OCI-LY7 (cell line): ENCODE measurements at regions of chr6 and their contacts with region 1.

Region 1: DNA sequence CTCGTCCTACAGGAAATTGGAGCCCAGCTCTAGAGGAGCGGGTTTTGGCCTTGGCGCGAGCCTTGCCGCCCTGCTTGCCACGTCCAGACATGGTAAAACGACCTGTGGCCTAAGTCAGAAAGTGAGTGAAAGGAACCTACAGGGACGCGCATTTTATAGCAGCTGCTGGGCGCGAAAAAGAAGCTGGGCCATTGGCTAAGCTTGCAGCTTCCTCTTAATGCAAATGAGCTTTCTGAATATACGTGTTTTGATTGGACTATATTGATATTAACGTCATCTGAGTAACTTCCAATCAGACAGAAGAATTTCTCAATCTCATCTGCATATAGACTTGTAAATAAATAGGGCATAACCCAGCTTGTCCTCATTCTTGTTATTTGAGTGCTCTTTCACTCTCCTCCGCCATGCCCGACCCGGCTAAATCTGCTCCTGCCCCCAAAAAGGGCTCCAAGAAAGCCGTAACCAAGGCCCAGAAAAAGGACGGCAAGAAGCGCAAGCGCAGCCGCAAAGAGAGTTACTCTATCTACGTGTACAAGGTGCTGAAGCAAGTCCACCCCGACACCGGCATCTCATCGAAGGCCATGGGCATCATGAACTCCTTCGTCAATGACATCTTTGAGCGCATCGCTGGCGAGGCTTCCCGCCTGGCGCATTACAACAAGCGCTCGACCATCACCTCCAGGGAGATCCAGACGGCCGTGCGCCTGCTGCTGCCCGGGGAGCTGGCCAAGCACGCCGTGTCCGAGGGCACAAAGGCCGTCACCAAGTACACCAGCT is 18.9 kb downstream of the OR2B2 start:
- DNase-seq: peak; percentile 96
- H3K4me3 ChIP-seq: peak overlapping the region; percentile 94
- H3K27ac ChIP-seq: peak overlapping the region; percentile 100
- H3K4me1 ChIP-seq: peaks cover 36% of the 10 kb centered on the region
- CTCF ChIP-seq: no peak

Region 2: DNA sequence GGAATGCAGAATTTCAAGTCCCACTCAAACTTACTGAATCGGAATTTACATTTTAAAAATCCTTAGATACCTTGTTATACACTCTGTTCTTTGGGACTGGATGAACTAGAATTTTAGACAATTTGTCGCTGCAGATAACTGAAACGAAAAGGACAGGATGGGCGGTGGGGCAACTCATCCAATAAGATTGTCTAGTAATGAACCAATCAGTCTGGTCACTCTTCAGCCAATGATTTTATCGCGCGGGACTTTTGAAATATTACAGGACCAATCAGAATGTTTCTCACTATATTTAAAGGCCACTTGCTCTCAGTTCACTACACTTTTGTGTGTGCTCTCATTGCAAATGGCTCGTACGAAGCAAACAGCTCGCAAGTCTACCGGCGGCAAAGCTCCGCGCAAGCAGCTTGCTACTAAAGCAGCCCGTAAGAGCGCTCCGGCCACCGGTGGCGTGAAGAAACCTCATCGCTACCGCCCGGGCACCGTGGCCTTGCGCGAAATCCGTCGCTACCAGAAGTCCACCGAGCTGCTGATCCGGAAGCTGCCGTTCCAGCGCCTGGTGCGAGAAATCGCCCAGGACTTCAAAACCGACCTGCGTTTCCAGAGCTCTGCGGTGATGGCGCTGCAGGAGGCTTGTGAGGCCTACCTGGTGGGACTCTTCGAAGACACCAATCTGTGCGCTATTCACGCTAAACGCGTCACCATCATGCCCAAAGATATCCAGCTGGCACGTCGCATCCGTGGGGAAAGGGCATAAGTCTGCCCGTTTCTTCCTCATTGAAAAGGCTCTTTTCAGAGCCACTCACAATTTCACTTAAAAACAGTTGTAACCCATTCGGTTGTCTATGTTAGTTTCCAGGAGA is 1848.0 kb before region 1 on chr6:
- CTCF ChIA-PET with region 1: no interaction called
- POLR2A ChIA-PET with region 1: interaction called, 8 read pairs
- intact Hi-C with region 1: loop called (anchors 5 kb)
- DNase-seq: peak; percentile 97
- H3K4me3 ChIP-seq: peak overlapping the region; percentile 67
- H3K27ac ChIP-seq: peak overlapping the region; percentile 99
- H3K4me1 ChIP-seq: peaks cover 66% of the 10 kb centered on the region
- CTCF ChIP-seq: peak; percentile 54

Region 3: DNA sequence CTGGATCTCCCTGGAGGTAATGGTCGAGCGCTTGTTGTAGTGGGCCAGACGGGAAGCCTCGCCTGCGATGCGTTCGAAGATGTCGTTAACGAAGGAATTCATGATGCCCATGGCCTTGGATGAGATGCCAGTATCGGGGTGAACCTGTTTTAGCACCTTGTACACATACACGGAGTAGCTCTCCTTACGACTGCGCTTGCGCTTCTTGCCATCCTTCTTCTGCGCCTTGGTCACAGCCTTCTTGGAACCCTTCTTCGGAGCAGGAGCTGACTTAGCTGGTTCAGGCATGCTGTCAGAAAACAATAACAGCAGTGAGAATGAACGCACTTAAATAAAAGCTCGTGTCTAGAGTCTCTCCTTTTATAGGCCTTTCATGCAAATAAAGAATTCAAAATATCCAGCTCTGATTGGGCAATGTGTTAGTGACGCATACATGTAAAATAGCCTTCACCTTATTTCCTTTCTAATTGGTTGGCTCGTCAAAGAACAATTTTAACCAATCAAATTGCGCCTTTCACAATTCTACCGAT is 1676.8 kb before region 1 on chr6:
- CTCF ChIA-PET with region 1: no interaction called
- POLR2A ChIA-PET with region 1: interaction called, 12 read pairs
- intact Hi-C with region 1: loop called (anchors 5 kb)
- DNase-seq: peak; percentile 98
- H3K4me3 ChIP-seq: peak overlapping the region; percentile 79
- H3K27ac ChIP-seq: peak overlapping the region; percentile 99
- H3K4me1 ChIP-seq: peaks cover 63% of the 10 kb centered on the region
- CTCF ChIP-seq: no peak

Region 4: DNA sequence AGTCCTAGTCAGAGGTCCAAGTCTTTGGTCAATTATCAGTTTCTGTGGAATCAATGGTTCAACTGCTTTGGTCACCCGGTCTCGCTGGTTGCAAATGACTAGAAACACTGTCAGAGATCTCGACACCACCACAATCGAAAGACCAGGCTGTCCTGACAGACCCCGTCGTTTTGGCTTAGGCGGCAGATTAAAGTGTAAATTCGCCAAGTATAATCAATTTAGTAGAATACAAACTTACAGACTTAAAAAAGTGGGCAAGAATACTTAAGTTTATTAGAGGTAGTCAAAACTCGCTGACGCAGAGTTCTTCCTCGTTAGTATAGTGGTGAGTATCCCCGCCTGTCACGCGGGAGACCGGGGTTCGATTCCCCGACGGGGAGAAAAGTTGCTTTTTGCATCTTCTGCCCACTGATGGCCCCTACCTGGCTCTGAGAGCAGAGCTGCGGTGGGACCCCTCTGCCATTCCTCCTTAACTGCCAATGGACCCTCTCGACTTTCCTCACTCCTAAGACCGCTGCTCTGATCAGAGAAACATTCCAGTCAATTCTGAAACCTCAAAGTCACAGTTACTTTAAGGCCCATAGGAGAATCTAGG is 389.7 kb before region 1 on chr6:
- CTCF ChIA-PET with region 1: no interaction called
- POLR2A ChIA-PET with region 1: no interaction called
- intact Hi-C with region 1: loop called (anchors 10 kb)
- DNase-seq: peak; percentile 74
- H3K4me3 ChIP-seq: peak overlapping the region; percentile 74
- H3K27ac ChIP-seq: peak overlapping the region; percentile 22
- H3K4me1 ChIP-seq: peaks cover 12% of the 10 kb centered on the region
- CTCF ChIP-seq: no peak

Region 5: GRCh38 chr6:27838058-27838944 is 54.9 kb before region 1 on chr6:
- CTCF ChIA-PET with region 1: no interaction called
- POLR2A ChIA-PET with region 1: interaction called, 202 read pairs
- intact Hi-C with region 1: loop called (anchors 1 kb)
- DNase-seq: peak; percentile 99
- H3K4me3 ChIP-seq: peak overlapping the region; percentile 87
- H3K27ac ChIP-seq: peak overlapping the region; percentile 97
- H3K4me1 ChIP-seq: peaks cover 37% of the 10 kb centered on the region
- CTCF ChIP-seq: no peak

Region 6: DNA sequence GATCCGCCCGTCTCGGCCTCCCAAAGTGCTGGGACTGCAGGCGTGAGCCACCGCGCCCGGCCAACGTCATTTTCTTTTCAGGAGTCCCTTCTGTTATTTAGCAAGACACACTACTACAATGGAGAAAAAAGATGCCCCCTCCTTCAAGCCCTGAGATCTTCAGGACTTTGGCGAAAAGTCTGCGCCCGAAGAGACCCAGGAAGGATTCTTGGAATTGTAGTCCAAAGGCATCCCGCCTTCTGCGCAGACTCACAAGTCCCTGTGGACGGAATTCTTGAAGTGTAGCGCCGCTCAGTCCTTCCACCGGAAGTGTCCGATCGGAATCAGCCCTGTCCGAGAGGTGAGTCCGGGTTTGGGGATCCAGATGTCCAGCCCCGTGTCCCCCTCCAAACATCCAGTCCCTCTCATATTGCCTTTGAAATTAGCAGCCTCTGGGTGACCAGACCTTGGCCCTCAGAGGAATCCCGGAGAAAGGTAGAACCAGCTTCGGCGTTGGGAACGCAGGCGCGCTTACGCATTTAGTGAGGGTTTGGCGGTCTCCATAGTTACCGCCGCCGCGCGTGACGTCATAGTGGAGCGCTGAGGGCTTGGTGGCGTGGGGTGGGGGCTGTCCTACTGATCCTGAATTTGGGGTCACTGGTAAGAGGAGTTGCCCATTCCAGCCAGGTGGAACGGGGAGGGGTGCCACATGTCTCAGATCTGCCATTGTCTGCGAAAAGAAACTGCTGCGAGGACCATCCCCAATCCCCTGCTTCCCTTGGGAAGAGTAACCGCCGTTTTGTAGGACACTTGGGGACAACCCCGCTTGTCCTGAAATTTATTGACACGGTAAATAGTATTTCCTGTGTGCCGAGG is 187.6 kb after region 1 on chr6:
- CTCF ChIA-PET with region 1: no interaction called
- POLR2A ChIA-PET with region 1: no interaction called
- intact Hi-C with region 1: loop called (anchors 2 kb)
- DNase-seq: peak; percentile 95
- H3K4me3 ChIP-seq: peak overlapping the region; percentile 87
- H3K27ac ChIP-seq: peak overlapping the region; percentile 70
- H3K4me1 ChIP-seq: peaks cover 12% of the 10 kb centered on the region
- CTCF ChIP-seq: no peak